Body of pancreas (tissue), 4 donors: ENCODE measurements at regions of chr11 and their contacts with region 1.

Region 1: GRCh38 chr11:128686745-128687177 is 7.1 kb upstream of the FLI1 start:
- DNase-seq: peak in 3 of 4 donors; percentile 33 to 40 (median 37)
- ATAC-seq: no peak
- H3K4me3 ChIP-seq: no peak overlapping the region
- H3K27ac ChIP-seq: no peak overlapping the region
- H3K4me1 ChIP-seq: peaks cover 41% of the 10 kb centered on the region
- H3K27me3 ChIP-seq: peaks cover 0 to 23% of the 10 kb centered on the region in 2 donors
- CTCF ChIP-seq: no peak
- POLR2A ChIP-seq: no peak

Region 2: DNA sequence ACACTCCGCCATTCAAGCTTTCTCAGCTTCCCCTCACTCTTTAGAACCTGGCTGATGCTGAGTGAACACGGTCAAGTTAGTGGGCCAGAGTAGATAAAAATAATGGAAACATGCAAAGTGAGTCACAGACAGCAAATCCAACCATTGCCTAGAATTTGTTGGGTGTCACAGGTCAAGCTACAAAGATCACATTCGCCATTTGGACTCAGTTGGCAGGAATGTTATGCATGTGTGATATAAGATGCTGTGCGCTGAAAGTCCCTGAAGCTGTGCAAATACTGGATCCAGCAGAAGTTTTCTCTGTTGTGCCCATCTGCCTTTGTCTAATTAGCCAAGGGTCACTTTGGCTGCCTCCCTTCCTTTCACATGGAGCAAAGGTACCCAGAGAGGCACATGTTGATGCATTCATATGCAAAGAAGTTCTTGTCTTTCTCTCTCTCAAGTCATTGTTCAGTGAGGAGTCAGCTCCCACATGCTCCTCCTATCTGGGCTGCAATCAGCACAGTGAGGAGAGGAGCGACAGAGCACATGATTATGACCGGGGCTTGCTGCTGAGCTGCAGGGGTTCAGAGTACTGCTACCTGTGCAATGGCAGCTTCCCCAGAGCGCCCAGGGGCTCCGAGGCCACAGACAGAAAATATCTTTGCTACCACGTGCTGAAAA is 46.8 kb after region 1 on chr11:
- intact Hi-C with region 1: loop called (anchors 10 kb)
- DNase-seq: no peak
- ATAC-seq: no peak
- H3K4me3 ChIP-seq: no peak overlapping the region
- H3K27ac ChIP-seq: no peak overlapping the region
- H3K4me1 ChIP-seq: peaks cover 17% of the 10 kb centered on the region
- H3K27me3 ChIP-seq: no peaks in the 10 kb centered on the region
- CTCF ChIP-seq: no peak
- POLR2A ChIP-seq: no peak